CD4-positive, alpha-beta T cell (primary cell): ENCODE measurements at regions of chr1 and their contacts with region 1.

Region 1: GRCh38 chr1:91021686-91022517 is at the start of gene ZNF644:
- DNase-seq: peak; percentile 79 to 97 (median 84)
- ATAC-seq: peak; percentile 83
- H3K4me3 ChIP-seq: peak within 1 kb of the TSS; percentile 90
- H3K4me3 Mint-ChIP-seq: peak within 1 kb of the TSS; percentile 87
- H3K27ac ChIP-seq: peak within 1 kb of the TSS; percentile 99 to 100
- H3K27ac Mint-ChIP-seq: peak within 1 kb of the TSS; percentile 91
- H3K4me1 ChIP-seq: peaks cover 34% of the 10 kb centered on the region
- H3K4me1 Mint-ChIP-seq: peaks cover 77% of the 10 kb centered on the region
- H3K27me3 ChIP-seq: no peaks in the 10 kb centered on the region
- H3K27me3 Mint-ChIP-seq: no peaks in the 10 kb centered on the region
- CTCF ChIP-seq: no peak
- total RNA-seq, gene ZNF644: 93.3 to 101 TPM

Region 2: GRCh38 chr1:90850898-90851710 is 170.8 kb before region 1 on chr1:
- CTCF ChIA-PET with region 1: no interaction called
- POLR2A ChIA-PET with region 1: interaction called, 5 read pairs
- intact Hi-C with region 1: loop called in 1 of 2 experiments (anchors 5 kb)
- DNase-seq: peak; percentile 34 to 89 (median 66)
- ATAC-seq: peak; percentile 97
- H3K4me3 ChIP-seq: peak overlapping the region; percentile 66
- H3K4me3 Mint-ChIP-seq: peak overlapping the region; percentile 85
- H3K27ac ChIP-seq: no peak overlapping the region
- H3K27ac Mint-ChIP-seq: no peak overlapping the region
- H3K4me1 ChIP-seq: peaks cover 17% of the 10 kb centered on the region
- H3K4me1 Mint-ChIP-seq: peaks cover 12% of the 10 kb centered on the region
- H3K27me3 ChIP-seq: peaks cover 18 to 52% of the 10 kb centered on the region in 2 experiments
- H3K27me3 Mint-ChIP-seq: peaks cover 79% of the 10 kb centered on the region
- CTCF ChIP-seq: peak; percentile 72

Region 3: GRCh38 chr1:90964444-90965035 is 57.4 kb before region 1 on chr1:
- CTCF ChIA-PET with region 1: no interaction called
- POLR2A ChIA-PET with region 1: no interaction called
- intact Hi-C with region 1: loop called in 1 of 2 experiments (anchors 10 kb)
- DNase-seq: peak in 3 of 14 experiments; percentile 20 to 30 (median 24)
- ATAC-seq: peak; percentile 37
- H3K4me3 ChIP-seq: no peak overlapping the region
- H3K4me3 Mint-ChIP-seq: no peak overlapping the region
- H3K27ac ChIP-seq: no peak overlapping the region
- H3K27ac Mint-ChIP-seq: no peak overlapping the region
- H3K4me1 ChIP-seq: no peaks in the 10 kb centered on the region
- H3K4me1 Mint-ChIP-seq: peaks cover 68% of the 10 kb centered on the region
- H3K27me3 ChIP-seq: no peaks in the 10 kb centered on the region
- H3K27me3 Mint-ChIP-seq: no peaks in the 10 kb centered on the region
- CTCF ChIP-seq: peak; percentile 66

Region 4: GRCh38 chr1:91007827-91008226 is 14.1 kb before region 1 on chr1:
- CTCF ChIA-PET with region 1: interaction called, 5 read pairs
- POLR2A ChIA-PET with region 1: interaction called, 13 read pairs
- intact Hi-C with region 1: no loop called
- DNase-seq: no peak
- ATAC-seq: no peak
- H3K4me3 ChIP-seq: no peak overlapping the region
- H3K4me3 Mint-ChIP-seq: no peak overlapping the region
- H3K27ac ChIP-seq: no peak overlapping the region
- H3K27ac Mint-ChIP-seq: peak overlapping the region; percentile 22
- H3K4me1 ChIP-seq: peaks cover 12% of the 10 kb centered on the region
- H3K4me1 Mint-ChIP-seq: peaks cover 87% of the 10 kb centered on the region
- H3K27me3 ChIP-seq: no peaks in the 10 kb centered on the region
- H3K27me3 Mint-ChIP-seq: no peaks in the 10 kb centered on the region
- CTCF ChIP-seq: no peak

Region 5: GRCh38 chr1:91036894-91037829 is 15.3 kb after region 1 on chr1:
- CTCF ChIA-PET with region 1: no interaction called
- POLR2A ChIA-PET with region 1: no interaction called
- intact Hi-C with region 1: no loop called
- DNase-seq: no peak
- ATAC-seq: no peak
- H3K4me3 ChIP-seq: no peak overlapping the region
- H3K4me3 Mint-ChIP-seq: no peak overlapping the region
- H3K27ac ChIP-seq: no peak overlapping the region
- H3K27ac Mint-ChIP-seq: no peak overlapping the region
- H3K4me1 ChIP-seq: no peaks in the 10 kb centered on the region
- H3K4me1 Mint-ChIP-seq: no peaks in the 10 kb centered on the region
- H3K27me3 ChIP-seq: peaks cover 0 to 5% of the 10 kb centered on the region in 2 experiments
- H3K27me3 Mint-ChIP-seq: peaks cover 22% of the 10 kb centered on the region
- CTCF ChIP-seq: no peak

Region 6: DNA sequence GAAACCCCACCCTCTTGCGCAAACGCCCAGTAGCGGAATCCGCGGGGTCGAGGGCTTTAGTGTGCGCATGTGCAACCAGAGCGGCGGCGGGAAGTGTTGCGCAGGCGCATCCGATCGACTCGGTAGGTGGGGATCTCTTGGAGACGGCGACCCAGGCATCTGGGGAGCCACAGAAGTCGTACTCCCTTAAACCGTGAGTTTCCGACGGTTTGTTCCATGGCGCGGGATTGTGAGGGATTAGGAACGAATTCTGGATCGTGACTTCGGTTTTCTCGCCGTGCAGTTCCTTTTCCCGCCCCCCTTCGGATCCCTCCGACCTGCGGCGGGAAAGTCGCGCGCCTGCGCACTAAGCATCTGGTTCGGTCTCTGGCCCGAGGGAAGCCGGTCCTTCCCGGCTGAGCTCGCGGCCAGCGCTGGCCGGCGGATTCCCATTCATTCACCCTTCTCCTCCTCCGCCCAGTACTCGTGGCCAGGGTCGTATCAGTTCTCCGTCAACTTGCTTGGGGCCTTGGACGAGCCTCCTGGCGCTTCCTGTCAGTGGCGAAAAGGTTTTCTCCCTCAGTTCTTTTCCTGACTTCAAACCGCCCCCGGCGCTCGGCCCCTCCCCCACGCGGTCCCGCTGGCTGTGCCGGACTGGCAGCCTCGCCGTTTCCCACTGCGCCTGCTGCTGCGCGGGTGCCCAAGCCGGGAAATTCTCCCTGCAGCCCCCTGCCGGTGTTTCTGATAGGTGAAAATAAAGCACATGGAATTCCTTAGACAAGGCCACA is 479.0 kb after region 1 on chr1 and contains the start of gene CDC7:
- CTCF ChIA-PET with region 1: no interaction called
- POLR2A ChIA-PET with region 1: no interaction called
- intact Hi-C with region 1: loop called in 1 of 2 experiments (anchors 5 kb)
- DNase-seq: peak; percentile 61 to 92 (median 80)
- ATAC-seq: peak; percentile 83
- H3K4me3 ChIP-seq: peak within 1 kb of the TSS; percentile 74
- H3K4me3 Mint-ChIP-seq: no peak within 1 kb of the TSS
- H3K27ac ChIP-seq: peak within 1 kb of the TSS; percentile 35 to 62
- H3K27ac Mint-ChIP-seq: no peak within 1 kb of the TSS
- H3K4me1 ChIP-seq: peaks cover 13% of the 10 kb centered on the region
- H3K4me1 Mint-ChIP-seq: peaks cover 31% of the 10 kb centered on the region
- H3K27me3 ChIP-seq: no peaks in the 10 kb centered on the region
- H3K27me3 Mint-ChIP-seq: no peaks in the 10 kb centered on the region
- CTCF ChIP-seq: peak; percentile 61
- total RNA-seq, gene CDC7: 4.2 to 4.8 TPM